B cell (primary cell): ENCODE measurements at regions of chr7 and their contacts with region 1.

Region 1: GRCh38 chr7:74083117-74083876 is at the start of gene LIMK1:
- DNase-seq: peak; percentile 89
- ATAC-seq: peak; percentile 95
- H3K4me3 ChIP-seq: peak within 1 kb of the TSS; percentile 19 to 68 (median 53)
- H3K4me3 Mint-ChIP-seq: peak within 1 kb of the TSS; percentile 86
- H3K27ac ChIP-seq: peak within 1 kb of the TSS in 1 of 2 donors; percentile 33
- H3K27ac Mint-ChIP-seq: peak within 1 kb of the TSS; percentile 63
- H3K4me1 ChIP-seq: peaks cover 7 to 21% of the 10 kb centered on the region in 2 donors
- H3K4me1 Mint-ChIP-seq: peaks cover 16% of the 10 kb centered on the region
- H3K27me3 ChIP-seq: no peaks in the 10 kb centered on the region
- H3K27me3 Mint-ChIP-seq: no peaks in the 10 kb centered on the region
- CTCF ChIP-seq: no peak
- total RNA-seq, gene LIMK1: 63.8 and 70.8 TPM in 2 replicates

Region 2: DNA sequence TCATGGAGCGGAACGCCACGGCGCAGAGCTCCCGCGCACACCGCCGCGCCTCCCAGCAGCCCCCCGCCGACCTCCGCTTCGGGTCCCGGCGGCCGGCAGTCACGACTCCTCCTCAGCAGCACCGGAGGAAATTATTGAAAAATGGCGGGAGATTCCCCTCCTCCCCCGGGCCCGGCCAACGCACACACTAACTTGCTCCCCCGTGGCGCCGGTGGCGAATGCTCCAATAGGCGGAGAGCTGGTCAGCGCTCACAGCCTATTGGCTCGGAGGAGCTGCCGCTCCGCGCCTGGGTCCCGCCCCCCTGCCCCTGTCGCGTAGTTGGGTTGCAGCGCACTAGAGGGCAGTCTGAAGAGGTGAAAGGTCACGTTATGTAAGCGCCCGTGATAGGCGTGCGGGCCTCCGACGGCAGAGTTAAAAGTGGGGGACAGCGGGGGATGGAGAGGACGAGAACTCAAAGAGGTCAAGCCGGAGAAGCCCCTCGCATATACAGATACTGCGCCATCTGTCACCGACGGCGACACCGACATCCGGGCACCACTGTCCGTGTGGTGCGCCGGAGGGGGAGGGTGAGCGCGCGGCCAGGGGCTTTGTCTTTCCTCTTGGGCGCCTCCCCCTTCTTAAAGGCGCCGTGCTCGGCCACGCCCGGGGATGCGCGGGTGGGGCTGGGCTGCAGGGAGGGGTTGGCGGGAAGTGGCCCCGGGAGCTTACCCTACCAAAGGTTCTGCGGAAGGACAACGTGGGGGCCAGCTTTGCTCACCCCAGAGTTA is 561.0 kb before region 1 on chr7 and contains the start of gene BAZ1B:
- CTCF ChIA-PET with region 1: no interaction called
- POLR2A ChIA-PET with region 1: no interaction called
- intact Hi-C with region 1: loop called (anchors 5 kb)
- DNase-seq: peak; percentile 98
- ATAC-seq: peak; percentile 91
- H3K4me3 ChIP-seq: peak within 1 kb of the TSS; percentile 50 to 78 (median 68)
- H3K4me3 Mint-ChIP-seq: peak within 1 kb of the TSS; percentile 95
- H3K27ac ChIP-seq: peak within 1 kb of the TSS; percentile 82 to 87
- H3K27ac Mint-ChIP-seq: peak within 1 kb of the TSS; percentile 98
- H3K4me1 ChIP-seq: peaks cover 58 to 63% of the 10 kb centered on the region in 2 donors
- H3K4me1 Mint-ChIP-seq: peaks cover 60% of the 10 kb centered on the region
- H3K27me3 ChIP-seq: no peaks in the 10 kb centered on the region
- H3K27me3 Mint-ChIP-seq: no peaks in the 10 kb centered on the region
- CTCF ChIP-seq: no peak
- total RNA-seq, gene BAZ1B: 67.0 and 68.1 TPM in 2 replicates

Region 3: DNA sequence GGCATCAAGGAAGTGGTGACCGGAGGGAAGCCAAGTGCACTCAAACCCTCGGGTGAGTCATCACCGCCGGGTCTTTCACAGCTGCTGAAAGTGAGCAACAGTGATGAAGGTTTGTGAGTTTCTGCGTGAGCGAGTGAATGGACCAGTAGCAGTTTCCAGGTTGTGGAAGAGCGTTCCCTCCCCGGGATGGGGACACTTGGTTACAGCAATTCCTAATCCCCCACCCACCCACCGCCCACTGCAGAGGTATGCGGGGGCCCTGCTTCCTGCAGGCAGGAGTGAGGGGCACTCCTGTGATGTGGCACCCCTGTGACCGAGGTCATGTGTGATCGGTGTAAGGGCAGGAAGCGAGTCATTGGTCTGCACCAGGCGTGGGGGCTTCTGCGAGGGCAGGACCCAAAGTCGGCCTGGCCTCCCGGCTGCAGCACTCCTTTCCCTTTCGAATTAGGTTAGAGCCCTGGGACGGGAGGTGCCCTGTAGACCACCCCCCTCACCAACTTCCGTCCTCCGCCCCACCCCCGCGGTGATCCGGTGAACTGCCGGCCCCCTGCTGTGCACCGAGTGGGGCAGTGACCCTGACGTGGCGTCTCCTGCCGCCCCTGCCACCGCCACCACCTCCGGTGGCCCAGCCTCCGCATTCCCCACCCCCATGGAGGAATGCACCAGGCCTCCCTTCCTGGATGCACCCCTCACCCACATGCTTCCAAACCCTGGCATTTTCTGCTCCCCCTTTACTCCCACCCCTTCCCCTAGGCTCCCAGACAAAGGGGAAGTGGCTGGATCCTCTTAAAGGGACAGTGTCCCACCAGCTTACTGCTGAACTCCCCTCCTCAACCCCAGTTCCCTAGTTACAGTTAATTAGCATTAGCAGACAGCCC is 11.2 kb after region 1 on chr7:
- CTCF ChIA-PET with region 1: interaction called, 3 read pairs
- POLR2A ChIA-PET with region 1: interaction called, 27 read pairs
- intact Hi-C with region 1: loop called (anchors 1 kb)
- DNase-seq: peak; percentile 73
- ATAC-seq: peak; percentile 66
- H3K4me3 ChIP-seq: peak overlapping the region; percentile 40 to 71 (median 56)
- H3K4me3 Mint-ChIP-seq: peak overlapping the region; percentile 82
- H3K27ac ChIP-seq: peak overlapping the region; percentile 81 to 82
- H3K27ac Mint-ChIP-seq: peak overlapping the region; percentile 95
- H3K4me1 ChIP-seq: peaks cover 26 to 35% of the 10 kb centered on the region in 2 donors
- H3K4me1 Mint-ChIP-seq: peaks cover 40% of the 10 kb centered on the region
- H3K27me3 ChIP-seq: no peaks in the 10 kb centered on the region
- H3K27me3 Mint-ChIP-seq: no peaks in the 10 kb centered on the region
- CTCF ChIP-seq: no peak

Region 4: DNA sequence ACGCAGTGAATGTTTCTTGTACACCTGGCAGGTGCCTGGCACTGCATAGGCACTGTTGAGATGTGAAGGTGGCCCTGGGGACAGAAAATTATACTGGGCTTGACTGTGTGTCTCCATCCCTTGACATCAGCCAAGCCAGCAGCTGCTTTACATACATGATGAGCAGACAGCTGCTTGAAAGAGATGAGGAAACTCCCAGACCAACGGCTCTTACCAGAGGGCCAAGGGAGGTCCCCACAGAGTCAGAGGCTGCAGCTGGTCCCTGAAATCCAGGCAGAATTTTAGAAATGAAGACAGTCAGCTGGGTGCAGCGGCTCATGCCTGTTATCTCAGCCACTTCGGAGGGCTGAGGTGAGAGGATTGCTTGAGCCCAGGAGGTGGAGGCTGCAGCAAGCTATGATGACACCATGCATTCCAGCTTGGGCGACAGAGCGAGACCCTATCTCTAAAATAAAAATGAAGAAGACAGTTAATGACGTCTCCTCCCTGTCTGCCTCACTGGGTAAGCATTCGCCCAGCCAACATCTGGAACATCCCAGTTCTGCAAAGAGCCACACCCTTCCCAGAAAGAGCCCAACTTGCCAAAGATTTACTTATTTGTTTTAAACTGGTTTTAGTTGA is 17.9 kb after region 1 on chr7:
- CTCF ChIA-PET with region 1: interaction called, 6 read pairs
- POLR2A ChIA-PET with region 1: interaction called, 9 read pairs
- intact Hi-C with region 1: loop called (anchors 1 kb)
- DNase-seq: peak; percentile 93
- ATAC-seq: peak; percentile 81
- H3K4me3 ChIP-seq: no peak overlapping the region
- H3K4me3 Mint-ChIP-seq: peak overlapping the region; percentile 64
- H3K27ac ChIP-seq: peak overlapping the region; percentile 85 to 88
- H3K27ac Mint-ChIP-seq: peak overlapping the region; percentile 98
- H3K4me1 ChIP-seq: peaks cover 23 to 27% of the 10 kb centered on the region in 2 donors
- H3K4me1 Mint-ChIP-seq: peaks cover 34% of the 10 kb centered on the region
- H3K27me3 ChIP-seq: no peaks in the 10 kb centered on the region
- H3K27me3 Mint-ChIP-seq: no peaks in the 10 kb centered on the region
- CTCF ChIP-seq: no peak

Region 5: GRCh38 chr7:74173866-74174605 is 90.7 kb after region 1 on chr7 and contains the start of gene EIF4H:
- CTCF ChIA-PET with region 1: interaction called, 3 read pairs
- POLR2A ChIA-PET with region 1: interaction called, 9 read pairs
- intact Hi-C with region 1: loop called (anchors 5 kb)
- DNase-seq: peak; percentile 98
- ATAC-seq: peak; percentile 84
- H3K4me3 ChIP-seq: peak within 1 kb of the TSS; percentile 67 to 93 (median 84)
- H3K4me3 Mint-ChIP-seq: peak within 1 kb of the TSS; percentile 95
- H3K27ac ChIP-seq: peak within 1 kb of the TSS; percentile 88 to 94
- H3K27ac Mint-ChIP-seq: peak within 1 kb of the TSS; percentile 98
- H3K4me1 ChIP-seq: peaks cover 44 to 52% of the 10 kb centered on the region in 2 donors
- H3K4me1 Mint-ChIP-seq: peaks cover 42% of the 10 kb centered on the region
- H3K27me3 ChIP-seq: no peaks in the 10 kb centered on the region
- H3K27me3 Mint-ChIP-seq: no peaks in the 10 kb centered on the region
- CTCF ChIP-seq: no peak
- total RNA-seq, gene EIF4H: 180 and 199 TPM in 2 replicates